ENCODE measurements at regions of chr10 and their contacts with region 1.

Region 1: DNA sequence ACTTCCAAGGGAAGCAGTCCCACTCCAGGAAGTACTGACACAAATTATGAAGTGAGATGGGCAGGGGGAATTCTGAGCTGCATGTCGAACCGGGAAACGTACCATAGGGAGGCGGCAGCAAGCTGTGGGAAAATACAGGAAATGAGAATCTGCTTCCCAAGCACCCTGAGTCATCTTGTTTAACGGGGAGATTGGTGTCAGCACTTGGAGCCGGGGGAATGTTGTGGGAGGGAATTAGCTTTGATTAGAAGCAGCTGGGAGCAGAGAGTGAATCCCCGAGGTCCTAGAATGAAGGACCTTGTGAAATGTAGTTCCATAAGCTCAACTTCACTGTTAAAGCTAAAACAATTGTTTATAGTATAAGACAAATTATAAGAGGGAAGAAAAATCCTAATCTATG is 141.4 kb upstream of the PRKCQ start:
- DNase-seq: peak; percentile 84
- H3K4me3 ChIP-seq: peak overlapping the region in 2 of 3 experiments; percentile 17 to 29
- H3K27ac ChIP-seq: peak overlapping the region; percentile 93
- H3K4me1 ChIP-seq: peaks cover 20% of the 10 kb centered on the region
- H3K27me3 ChIP-seq: no peaks in the 10 kb centered on the region
- CTCF ChIP-seq: peak; percentile 39 to 66

Region 2: GRCh38 chr10:6045314-6045848 is 676.1 kb before region 1 on chr10:
- CTCF ChIA-PET with region 1: no interaction called
- dilution Hi-C with region 1: no loop called
- in situ Hi-C with region 1: no loop called
- intact Hi-C with region 1: no loop called
- DNase-seq: no peak
- H3K4me3 ChIP-seq: no peak overlapping the region
- H3K27ac ChIP-seq: no peak overlapping the region
- H3K4me1 ChIP-seq: no peaks in the 10 kb centered on the region
- H3K27me3 ChIP-seq: no peaks in the 10 kb centered on the region
- CTCF ChIP-seq: no peak

Region 3: GRCh38 chr10:6558759-6559461 is 162.6 kb before region 1 on chr10:
- CTCF ChIA-PET with region 1: no interaction called
- dilution Hi-C with region 1: no loop called
- in situ Hi-C with region 1: no loop called
- intact Hi-C with region 1: no loop called
- DNase-seq: no peak
- H3K4me3 ChIP-seq: no peak overlapping the region
- H3K27ac ChIP-seq: no peak overlapping the region
- H3K4me1 ChIP-seq: peaks cover 6% of the 10 kb centered on the region
- H3K27me3 ChIP-seq: no peaks in the 10 kb centered on the region
- CTCF ChIP-seq: no peak

Region 4: GRCh38 chr10:6737758-6738505 is 16.5 kb after region 1 on chr10:
- CTCF ChIA-PET with region 1: interaction called, 3 read pairs
- dilution Hi-C with region 1: no loop called
- in situ Hi-C with region 1: no loop called
- intact Hi-C with region 1: loop called (anchors 1 kb)
- DNase-seq: peak; percentile 74
- H3K4me3 ChIP-seq: peak overlapping the region; percentile 64 to 80 (median 64)
- H3K27ac ChIP-seq: peak overlapping the region; percentile 91
- H3K4me1 ChIP-seq: peaks cover 38% of the 10 kb centered on the region
- H3K27me3 ChIP-seq: no peaks in the 10 kb centered on the region
- CTCF ChIP-seq: no peak

Region 5: GRCh38 chr10:6748978-6749635 is 27.6 kb after region 1 on chr10:
- CTCF ChIA-PET with region 1: no interaction called
- dilution Hi-C with region 1: no loop called
- in situ Hi-C with region 1: no loop called
- intact Hi-C with region 1: no loop called
- DNase-seq: peak; percentile 90
- H3K4me3 ChIP-seq: no peak overlapping the region
- H3K27ac ChIP-seq: peak overlapping the region; percentile 71
- H3K4me1 ChIP-seq: peaks cover 22% of the 10 kb centered on the region
- H3K27me3 ChIP-seq: no peaks in the 10 kb centered on the region
- CTCF ChIP-seq: no peak

Region 6: GRCh38 chr10:6786579-6787031 is 65.1 kb after region 1 on chr10:
- CTCF ChIA-PET with region 1: no interaction called
- dilution Hi-C with region 1: loop called (anchors 5 kb)
- in situ Hi-C with region 1: loop called in 1 of 2 experiments (anchors 10 kb)
- intact Hi-C with region 1: no loop called
- DNase-seq: peak; percentile 48
- H3K4me3 ChIP-seq: peak overlapping the region in 1 of 3 experiments; percentile 10
- H3K27ac ChIP-seq: no peak overlapping the region
- H3K4me1 ChIP-seq: peaks cover 22% of the 10 kb centered on the region
- H3K27me3 ChIP-seq: no peaks in the 10 kb centered on the region
- CTCF ChIP-seq: peak; percentile 48 to 66

Region 7: GRCh38 chr10:6920072-6921019 is 198.9 kb after region 1 on chr10:
- CTCF ChIA-PET with region 1: interaction called, 3 read pairs
- dilution Hi-C with region 1: no loop called
- in situ Hi-C with region 1: loop called in 1 of 2 experiments (anchors 10 kb)
- intact Hi-C with region 1: loop called (anchors 1 kb)
- DNase-seq: peak; percentile 48
- H3K4me3 ChIP-seq: no peak overlapping the region
- H3K27ac ChIP-seq: no peak overlapping the region
- H3K4me1 ChIP-seq: peaks cover 6% of the 10 kb centered on the region
- H3K27me3 ChIP-seq: peaks cover 6% of the 10 kb centered on the region
- CTCF ChIP-seq: peak; percentile 81 to 89

Region 8: DNA sequence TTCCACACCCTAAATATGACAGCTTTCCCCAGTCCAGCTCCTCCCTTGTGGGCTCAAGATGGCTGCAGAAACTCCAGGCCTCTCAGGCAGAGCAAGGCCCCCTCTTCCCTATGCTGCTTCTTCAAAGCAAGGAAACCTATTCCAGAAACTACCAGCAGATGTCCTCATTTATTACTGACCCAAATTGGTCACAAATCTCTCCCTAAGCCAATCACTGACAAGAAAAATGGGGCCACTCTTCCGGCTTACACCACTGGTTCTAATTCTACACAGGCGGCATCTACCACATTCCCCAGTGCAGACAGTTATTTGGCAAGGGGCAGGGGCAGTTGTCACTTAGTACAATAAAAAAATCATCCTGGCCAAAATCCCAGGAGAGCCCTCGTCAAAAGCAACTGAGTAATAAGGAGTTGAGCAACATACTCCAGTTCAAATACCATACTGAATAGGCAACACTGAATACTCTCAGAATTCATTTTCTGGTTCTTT is 539.0 kb after region 1 on chr10:
- CTCF ChIA-PET with region 1: no interaction called
- dilution Hi-C with region 1: no loop called
- in situ Hi-C with region 1: no loop called
- intact Hi-C with region 1: loop called (anchors 5 kb)
- DNase-seq: peak; percentile 53
- H3K4me3 ChIP-seq: no peak overlapping the region
- H3K27ac ChIP-seq: no peak overlapping the region
- H3K4me1 ChIP-seq: peaks cover 7% of the 10 kb centered on the region
- H3K27me3 ChIP-seq: no peaks in the 10 kb centered on the region
- CTCF ChIP-seq: peak; percentile 50 to 53

Measured in mammary epithelial cell (primary cell).